Activated CD4-positive, alpha-beta T cell treated with anti-CD3 and anti-CD28 coated beads for 36 hours (primary cell): ENCODE measurements at regions of chr12 and their contacts with region 1.

Region 1: GRCh38 chr12:49413796-49414195 is 46.5 kb downstream of the SPATS2 start:
- DNase-seq: no peak
- ATAC-seq: no peak
- H3K4me3 Mint-ChIP-seq: no peak overlapping the region
- H3K27ac Mint-ChIP-seq: no peak overlapping the region
- H3K4me1 Mint-ChIP-seq: peaks cover 6% of the 10 kb centered on the region
- H3K27me3 Mint-ChIP-seq: no peaks in the 10 kb centered on the region

Region 2: GRCh38 chr12:48946205-48946604 is 467.6 kb before region 1 on chr12:
- CTCF ChIA-PET with region 1: no interaction called
- POLR2A ChIA-PET with region 1: no interaction called
- intact Hi-C with region 1: no loop called
- DNase-seq: no peak
- ATAC-seq: no peak
- H3K4me3 Mint-ChIP-seq: no peak overlapping the region
- H3K27ac Mint-ChIP-seq: no peak overlapping the region
- H3K4me1 Mint-ChIP-seq: peaks cover 5% of the 10 kb centered on the region
- H3K27me3 Mint-ChIP-seq: no peaks in the 10 kb centered on the region

Region 3: GRCh38 chr12:49432616-49433015 is 18.8 kb after region 1 on chr12:
- CTCF ChIA-PET with region 1: no interaction called
- POLR2A ChIA-PET with region 1: no interaction called
- intact Hi-C with region 1: loop called in 1 of 2 experiments (anchors 2 kb)
- DNase-seq: no peak
- ATAC-seq: no peak
- H3K4me3 Mint-ChIP-seq: no peak overlapping the region
- H3K27ac Mint-ChIP-seq: no peak overlapping the region
- H3K4me1 Mint-ChIP-seq: peaks cover 3% of the 10 kb centered on the region
- H3K27me3 Mint-ChIP-seq: no peaks in the 10 kb centered on the region